ENCODE measurements at regions of chr6 and their contacts with region 1.

Region 1: DNA sequence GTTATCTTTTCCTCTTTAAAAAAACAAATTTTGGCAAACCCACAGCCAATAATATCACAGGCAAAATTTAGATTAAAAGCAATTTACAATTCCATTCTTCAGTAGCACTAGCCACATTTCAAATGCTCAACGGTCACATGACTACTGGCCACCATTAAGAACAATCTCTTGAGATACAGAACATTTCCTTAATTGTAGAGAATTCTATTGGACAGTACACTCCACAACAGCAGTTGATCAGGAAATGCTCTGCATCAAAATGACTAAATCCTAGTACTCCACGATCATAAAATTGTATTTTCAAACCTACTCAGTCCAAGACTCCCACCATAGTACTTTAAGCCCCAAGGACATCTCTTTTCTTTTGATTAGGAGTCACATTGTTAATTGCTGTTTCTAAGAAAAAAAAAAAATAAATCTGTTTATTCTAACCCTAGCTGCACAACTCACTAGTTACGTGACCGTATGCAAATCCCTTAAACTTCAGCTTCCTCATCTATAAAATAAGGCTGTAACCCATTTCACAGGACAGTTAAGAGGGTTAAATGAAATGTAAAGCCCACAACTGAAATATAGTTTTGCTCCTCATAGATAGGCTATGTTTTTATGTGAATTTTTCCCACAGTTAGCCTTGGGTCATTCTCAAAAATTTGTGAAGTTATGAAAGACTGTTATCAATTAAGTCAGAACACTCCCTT is 9.8 kb downstream of the C6orf62 start:
- DNase-seq: no peak
- ATAC-seq: no peak
- H3K4me3 ChIP-seq: no peak overlapping the region
- H3K4me1 ChIP-seq: peaks cover 9% of the 10 kb centered on the region
- CTCF ChIP-seq: no peak

Region 2: DNA sequence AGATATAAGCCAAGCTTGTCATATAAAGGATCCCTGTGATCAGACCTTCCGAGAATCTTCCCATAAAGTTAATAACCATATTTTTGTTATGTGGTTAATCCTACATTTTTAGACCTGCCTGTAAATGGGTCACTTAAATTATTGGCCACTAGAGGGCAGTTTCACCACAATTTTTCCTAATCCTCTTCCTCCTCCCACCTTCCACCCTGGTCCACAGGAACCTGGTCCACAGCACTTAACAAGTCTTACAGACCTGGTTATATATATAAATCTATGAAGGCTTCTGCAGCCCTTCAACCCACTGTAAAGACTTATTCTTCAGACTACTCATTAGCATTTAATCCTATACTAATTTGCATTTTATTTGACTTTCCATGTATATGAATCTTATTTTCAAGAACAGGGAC is 278.1 kb before region 1 on chr6:
- intact Hi-C with region 1: loop called in 1 of 2 experiments (anchors 5 kb)
- DNase-seq: peak in 1 of 3 donors; percentile 49
- ATAC-seq: peak; percentile 67
- H3K4me3 ChIP-seq: no peak overlapping the region
- H3K4me1 ChIP-seq: no peaks in the 10 kb centered on the region
- CTCF ChIP-seq: peak; percentile 23

Region 3: DNA sequence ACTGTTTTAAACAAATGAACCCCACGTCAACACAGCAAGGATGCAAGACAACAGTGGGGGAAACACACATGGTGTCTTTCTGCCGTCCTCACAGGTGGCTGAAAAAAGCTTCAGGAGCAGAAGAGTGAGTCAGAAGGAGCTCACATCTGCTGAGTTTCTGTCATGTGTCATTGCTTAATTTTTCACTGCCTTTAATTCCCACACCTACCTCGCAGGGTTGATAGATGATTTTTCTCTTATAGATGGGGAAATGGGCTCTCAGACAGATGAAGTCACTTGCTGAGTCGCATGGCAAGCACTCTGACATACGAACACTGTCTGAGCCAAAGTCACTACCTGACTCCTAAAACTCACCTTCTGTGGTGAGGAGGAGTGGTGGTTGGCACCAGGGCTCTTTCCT is 541.7 kb after region 1 on chr6:
- intact Hi-C with region 1: no loop called
- DNase-seq: no peak
- ATAC-seq: no peak
- H3K4me3 ChIP-seq: no peak overlapping the region
- H3K4me1 ChIP-seq: no peaks in the 10 kb centered on the region
- CTCF ChIP-seq: no peak

Measured in mucosa of descending colon (tissue), 3 donors.